A549 (cell line): ENCODE measurements at regions of chr7 and their contacts with region 1.

Region 1: GRCh38 chr7:73701357-73701995 is 18.0 kb downstream of the STX1A start:
- DNase-seq: peak; percentile 74 to 95
- ATAC-seq: peak in 1 of 2 experiments; percentile 24; a peak in 3 of 6 replicates
- H3K4me3 ChIP-seq: no peak overlapping the region
- H3K27ac ChIP-seq: peak overlapping the region; percentile 99 to 100
- H3K4me1 ChIP-seq: peaks cover 75% of the 10 kb centered on the region
- CTCF ChIP-seq: peak; percentile 55
- EP300 ChIP-seq: no peak
- POLR2A ChIP-seq: no peak
- RAD21 ChIP-seq: peak; percentile 53 to 70; a peak in 4 of 5 replicates

Region 2: DNA sequence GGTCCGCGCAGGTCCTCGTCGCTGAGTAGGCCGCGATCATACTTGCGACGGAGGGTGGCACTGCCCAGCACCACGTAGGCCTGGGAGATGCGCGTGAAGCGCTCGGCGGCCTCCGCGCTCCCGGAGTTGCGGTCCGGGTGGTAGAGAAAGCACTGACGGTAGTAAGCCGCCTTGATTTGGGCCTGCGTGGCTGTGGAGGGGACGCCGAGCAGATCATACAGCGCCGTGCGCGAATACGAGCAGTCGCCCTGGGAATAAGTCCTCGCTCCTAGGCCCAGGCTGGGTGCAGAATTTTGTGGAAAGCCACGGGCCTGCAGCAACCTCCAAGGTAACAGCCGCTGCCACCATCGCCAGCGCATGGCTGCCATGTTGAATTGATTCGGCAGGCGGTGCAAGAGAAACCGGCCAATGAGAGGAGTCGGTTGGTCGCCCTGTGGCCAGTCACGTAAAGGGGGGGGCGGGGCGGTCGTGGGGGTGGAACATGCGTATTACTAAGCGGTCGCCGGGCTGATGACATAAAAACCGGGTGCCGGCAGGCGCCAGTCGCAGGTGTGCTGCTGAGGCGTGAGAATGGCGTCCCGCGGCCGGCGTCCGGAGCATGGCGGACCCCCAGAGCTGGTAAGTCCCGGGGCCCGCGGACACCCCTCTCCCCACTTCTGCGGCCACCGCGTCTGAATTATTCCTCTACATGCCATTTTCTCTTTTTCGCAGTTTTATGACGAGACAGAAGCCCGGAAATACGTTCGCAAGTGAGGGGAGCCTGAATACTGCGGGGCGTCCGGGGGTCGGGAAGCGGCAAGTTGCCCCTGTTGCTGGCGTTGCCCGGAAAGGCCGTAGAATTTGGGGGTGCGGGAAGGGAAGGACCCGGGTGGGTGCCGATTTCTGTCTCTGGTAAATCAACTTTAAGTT is 18.2 kb before region 1 on chr7 and contains the starts of genes BUD23 and DNAJC30:
- CTCF ChIA-PET with region 1: interaction called, 19 read pairs
- POLR2A ChIA-PET with region 1: interaction called, 13 read pairs
- DNase-seq: peak; percentile 93 to 98
- ATAC-seq: peak; percentile 96
- H3K4me3 ChIP-seq: peak within 1 kb of the TSS; percentile 77
- H3K27ac ChIP-seq: peak within 1 kb of the TSS; percentile 92 to 93
- H3K4me1 ChIP-seq: peaks cover 33% of the 10 kb centered on the region
- CTCF ChIP-seq: no peak
- EP300 ChIP-seq: no peak
- POLR2A ChIP-seq: peak; percentile 77
- RAD21 ChIP-seq: no peak; a peak in 1 of 5 replicates
- polyA plus RNA-seq, gene BUD23: 131 and 161 TPM in 2 replicates
- polyA plus RNA-seq, gene DNAJC30: 5.2 and 5.7 TPM in 2 replicates

Region 3: GRCh38 chr7:73690646-73691045 is 10.8 kb before region 1 on chr7:
- CTCF ChIA-PET with region 1: interaction called, 34 read pairs
- POLR2A ChIA-PET with region 1: interaction called, 6 read pairs
- DNase-seq: no peak
- ATAC-seq: no peak
- H3K4me3 ChIP-seq: no peak overlapping the region
- H3K27ac ChIP-seq: no peak overlapping the region
- H3K4me1 ChIP-seq: no peaks in the 10 kb centered on the region
- CTCF ChIP-seq: no peak
- EP300 ChIP-seq: no peak
- POLR2A ChIP-seq: no peak
- RAD21 ChIP-seq: no peak

Region 4: DNA sequence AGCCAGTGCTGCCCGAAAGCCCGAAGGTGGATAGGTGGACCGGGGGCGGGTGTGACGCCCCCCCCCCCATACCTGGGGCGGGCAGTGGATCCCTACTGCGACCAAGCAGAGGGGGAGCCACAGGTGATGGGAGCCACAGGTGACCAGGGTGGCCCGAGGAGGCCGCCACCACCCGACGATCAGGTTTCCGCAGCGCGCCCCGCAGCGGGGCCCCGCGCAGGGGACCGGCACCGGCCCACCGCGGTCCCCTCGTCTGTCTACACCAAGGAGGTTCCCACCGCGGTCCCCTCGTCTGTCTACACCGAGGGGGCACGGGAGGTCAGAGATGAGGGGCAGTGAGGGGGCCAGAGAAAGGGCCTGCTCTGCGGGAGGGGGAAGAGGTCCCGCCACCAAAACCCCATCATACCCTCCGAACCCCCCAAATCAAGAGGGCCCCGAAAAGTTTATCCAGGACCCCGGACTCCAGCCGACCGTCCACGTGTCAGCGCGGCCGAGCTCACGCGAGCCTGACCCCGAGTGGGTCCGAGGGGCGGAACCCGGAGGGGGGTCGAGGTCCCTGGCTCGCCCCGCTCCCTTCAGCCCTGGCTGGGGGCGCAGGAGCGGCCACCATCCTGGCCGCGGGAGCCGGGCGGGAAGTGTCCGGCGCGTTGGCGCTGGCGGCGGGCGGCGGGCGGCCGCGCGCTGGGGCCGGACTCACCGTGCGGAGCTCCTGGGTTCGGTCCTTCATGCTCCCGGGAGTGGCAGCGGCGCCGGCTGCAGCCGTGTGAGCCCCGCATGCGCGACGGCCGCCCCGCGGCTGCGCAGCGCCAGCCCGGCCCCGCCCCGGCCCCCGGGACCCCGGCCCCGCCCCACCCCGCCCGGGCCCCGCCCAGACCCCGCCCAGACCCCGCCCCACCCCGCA is 17.7 kb after region 1 on chr7 and contains the start of gene STX1A:
- CTCF ChIA-PET with region 1: interaction called, 139 read pairs
- POLR2A ChIA-PET with region 1: interaction called, 135 read pairs
- DNase-seq: peak in 1 of 2 experiments; percentile 66
- ATAC-seq: peak; percentile 17 to 32; a peak in 5 of 6 replicates
- H3K4me3 ChIP-seq: peak within 1 kb of the TSS; percentile 100
- H3K27ac ChIP-seq: peak within 1 kb of the TSS; percentile 99 to 100
- H3K4me1 ChIP-seq: peaks cover 65% of the 10 kb centered on the region
- CTCF ChIP-seq: no peak
- EP300 ChIP-seq: no peak
- POLR2A ChIP-seq: peak; percentile 63
- RAD21 ChIP-seq: no peak
- polyA plus RNA-seq, gene STX1A: 72.9 and 81.7 TPM in 2 replicates

Region 5: GRCh38 chr7:73749931-73750776 is 48.7 kb after region 1 on chr7:
- CTCF ChIA-PET with region 1: no interaction called
- POLR2A ChIA-PET with region 1: no interaction called
- DNase-seq: no peak
- ATAC-seq: no peak
- H3K4me3 ChIP-seq: no peak overlapping the region
- H3K27ac ChIP-seq: no peak overlapping the region
- H3K4me1 ChIP-seq: no peaks in the 10 kb centered on the region
- CTCF ChIP-seq: no peak
- EP300 ChIP-seq: no peak
- POLR2A ChIP-seq: no peak
- RAD21 ChIP-seq: no peak